Astrocyte of the cerebellum (primary cell): ENCODE measurements at regions of chr10 and their contacts with region 1.

Region 1: DNA sequence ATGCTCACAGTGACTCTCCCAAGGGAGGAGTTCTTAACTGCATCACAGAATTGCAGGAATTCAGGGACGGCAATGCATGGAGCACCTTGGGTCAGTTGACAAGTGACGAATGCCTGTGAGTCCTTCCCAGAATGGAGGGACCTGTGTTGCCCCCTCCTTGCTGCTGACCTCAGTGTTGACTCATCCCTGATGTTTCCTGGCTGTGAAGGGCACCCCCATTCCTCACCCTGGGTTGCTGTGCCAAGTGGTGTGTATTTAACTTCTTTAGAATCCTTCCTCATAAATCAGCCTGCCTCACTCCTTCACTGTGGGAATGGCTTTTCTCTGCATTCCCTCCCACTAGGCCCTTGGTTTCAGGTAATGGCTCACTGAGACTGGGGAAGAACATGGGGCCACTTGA is 98.9 kb downstream of the LRMDA start:
- DNase-seq: peak; percentile 49
- H3K4me3 ChIP-seq: no peak overlapping the region
- CTCF ChIP-seq: no peak

Region 2: DNA sequence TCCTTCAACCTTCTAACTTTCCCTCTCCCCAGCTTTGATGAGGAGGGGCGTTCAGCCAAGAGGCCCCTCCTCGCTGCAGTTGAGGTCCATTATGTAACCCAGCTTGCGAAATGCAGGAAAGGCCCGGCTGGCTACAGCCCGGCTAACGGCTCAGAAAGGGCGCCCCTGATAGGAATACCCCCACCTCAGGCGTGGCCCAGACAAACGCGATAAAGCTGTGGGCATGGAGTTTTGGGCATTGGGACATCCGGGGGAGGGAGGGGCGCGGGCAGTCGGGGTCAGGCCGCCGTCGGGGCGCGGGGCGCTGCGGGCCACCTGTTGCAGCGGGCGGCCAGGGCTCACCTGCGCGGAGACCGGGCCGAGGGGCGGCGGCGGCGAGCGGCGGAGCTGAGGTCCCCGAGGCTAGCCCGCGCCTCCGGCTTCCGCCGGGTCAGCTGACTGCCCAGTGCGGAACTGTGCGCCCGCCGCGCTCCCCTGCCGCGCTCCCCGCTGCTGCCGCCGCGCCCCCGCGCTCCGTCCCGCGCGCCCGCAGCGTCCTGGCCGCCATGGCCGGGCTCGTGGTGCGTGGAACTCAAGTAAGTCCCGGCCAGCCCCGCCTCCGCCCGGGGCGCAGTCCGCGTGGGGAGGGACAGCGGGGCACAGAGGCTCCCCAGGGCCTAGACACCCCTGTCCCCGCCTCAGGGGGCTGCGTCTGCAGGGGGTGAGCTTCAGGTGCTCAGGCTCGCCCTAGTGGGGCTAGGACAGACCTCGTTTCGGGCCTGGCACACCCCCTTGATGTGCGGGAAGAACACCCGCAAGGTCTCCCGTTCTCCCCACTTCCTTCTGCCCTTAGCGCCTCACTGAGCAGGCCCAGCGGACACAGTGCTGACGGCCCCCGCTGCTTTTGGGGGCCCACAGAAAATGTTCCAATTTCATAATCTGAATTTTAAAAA is 98.9 kb before region 1 on chr10 and contains the start of gene LRMDA:
- in situ Hi-C with region 1: loop called (anchors 5 kb)
- DNase-seq: no peak
- H3K4me3 ChIP-seq: peak within 1 kb of the TSS; percentile 32
- CTCF ChIP-seq: no peak

Region 3: GRCh38 chr10:75565286-75566251 is 35.2 kb after region 1 on chr10:
- in situ Hi-C with region 1: loop called (anchors 5 kb)
- DNase-seq: no peak
- H3K4me3 ChIP-seq: no peak overlapping the region
- CTCF ChIP-seq: no peak